ENCODE measurements at regions of chr13 and their contacts with region 1.

Region 1: DNA sequence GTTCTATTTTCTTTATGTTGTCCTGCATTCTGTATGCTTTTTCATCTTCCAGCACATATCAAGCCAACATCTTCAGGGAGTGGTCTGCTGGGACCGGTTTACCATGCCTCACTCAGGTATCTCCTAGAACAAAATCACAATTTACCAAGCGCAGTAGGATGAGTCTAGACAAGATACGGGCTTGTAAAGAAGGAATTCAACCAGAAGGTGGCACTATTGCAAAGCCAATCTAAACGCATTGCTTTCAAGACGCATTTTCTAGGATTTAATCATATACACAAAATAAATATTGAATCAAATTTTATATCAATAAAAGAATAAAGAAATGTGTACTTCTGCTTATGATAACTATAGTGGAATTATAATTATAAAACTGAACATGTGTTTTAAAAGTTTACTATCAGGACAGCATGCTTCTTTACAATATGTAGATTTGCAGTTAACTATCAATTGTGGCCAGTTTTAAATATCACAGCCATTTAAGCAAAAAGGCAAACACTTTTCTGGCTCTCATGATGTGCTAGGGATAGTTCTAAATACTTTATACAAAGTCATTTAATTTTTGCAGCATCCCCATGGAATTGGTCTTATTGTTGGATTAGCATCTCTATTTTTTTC is 16.1 kb upstream of the TPP2 start:
- DNase-seq: peak; percentile 51
- H3K4me3 ChIP-seq: no peak overlapping the region
- H3K27ac ChIP-seq: no peak overlapping the region
- H3K4me1 ChIP-seq: no peaks in the 10 kb centered on the region
- H3K27me3 ChIP-seq: no peaks in the 10 kb centered on the region
- CTCF ChIP-seq: peak; percentile 74 to 76

Region 2: GRCh38 chr13:102651892-102652291 is 71.2 kb after region 1 on chr13:
- CTCF ChIA-PET with region 1: no interaction called
- dilution Hi-C with region 1: loop called (anchors 5 kb)
- in situ Hi-C with region 1: no loop called
- intact Hi-C with region 1: no loop called
- DNase-seq: no peak
- H3K4me3 ChIP-seq: no peak overlapping the region
- H3K27ac ChIP-seq: no peak overlapping the region
- H3K4me1 ChIP-seq: no peaks in the 10 kb centered on the region
- H3K27me3 ChIP-seq: no peaks in the 10 kb centered on the region
- CTCF ChIP-seq: no peak

Region 3: DNA sequence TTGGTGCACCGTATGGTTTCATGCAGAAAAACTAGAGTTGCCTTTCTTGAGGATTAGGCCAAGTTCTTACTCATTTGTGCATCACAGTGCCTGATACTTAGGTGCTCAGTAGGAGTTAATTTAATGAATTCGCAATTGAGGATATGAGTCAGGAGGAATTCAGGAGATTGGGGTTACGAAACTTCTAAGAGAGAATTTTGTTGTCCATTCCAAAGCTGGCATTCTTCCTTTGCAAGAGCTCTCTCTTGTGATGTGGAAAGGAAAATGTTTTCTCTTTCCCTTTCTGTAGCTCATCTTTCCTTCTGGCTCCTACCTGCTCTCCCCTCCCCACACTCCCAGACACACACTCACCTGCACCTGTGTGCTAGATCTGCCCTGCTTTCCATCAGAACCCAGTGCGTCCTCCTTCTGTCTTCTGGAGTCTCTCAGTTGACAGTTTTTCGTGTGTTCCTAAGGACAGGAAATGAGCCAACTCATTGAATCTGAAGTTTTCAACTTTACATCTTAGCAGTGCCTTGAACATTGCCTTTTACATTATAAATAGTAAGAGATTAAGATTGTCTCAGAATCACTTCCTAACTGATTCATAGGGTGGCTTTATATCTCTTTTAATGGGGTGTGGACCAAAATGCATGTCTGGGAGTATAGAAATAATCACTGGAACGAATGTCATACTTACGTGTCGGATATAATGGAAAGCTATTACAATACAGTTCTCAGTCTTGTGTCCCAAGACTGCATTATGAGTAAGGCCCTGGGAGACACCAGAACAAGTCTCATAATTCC is 245.5 kb after region 1 on chr13:
- CTCF ChIA-PET with region 1: no interaction called
- dilution Hi-C with region 1: no loop called
- in situ Hi-C with region 1: no loop called
- intact Hi-C with region 1: loop called (anchors 1 kb)
- DNase-seq: peak; percentile 88
- H3K4me3 ChIP-seq: peak overlapping the region; percentile 21 to 46 (median 40)
- H3K27ac ChIP-seq: peak overlapping the region; percentile 59
- H3K4me1 ChIP-seq: peaks cover 20% of the 10 kb centered on the region
- H3K27me3 ChIP-seq: no peaks in the 10 kb centered on the region
- CTCF ChIP-seq: peak; percentile 3 to 28